H1 (cell line): ENCODE measurements at regions of chr2 and their contacts with region 1.

Region 1: GRCh38 chr2:96509114-96509846 is 4.1 kb upstream of the NEURL3 start:
- DNase-seq: peak; percentile 90 to 99
- H3K4me3 ChIP-seq: peak overlapping the region in 3 of 4 experiments; percentile 28 to 53 (median 40); a peak in 6 of 8 replicates
- H3K27ac ChIP-seq: no peak overlapping the region
- H3K4me1 ChIP-seq: peaks cover 0 to 6% (median 5%) of the 10 kb centered on the region in 4 experiments; a peak in 3 of 7 replicates
- H3K27me3 ChIP-seq: peaks cover 4 to 14% (median 10%) of the 10 kb centered on the region in 4 experiments
- CTCF ChIP-seq: peak in 2 of 3 experiments; percentile 98 to 99; a peak in 3 of 4 replicates
- EP300 ChIP-seq: no peak
- POLR2A ChIP-seq: no peak
- RAD21 ChIP-seq: peak; percentile 96

Region 2: DNA sequence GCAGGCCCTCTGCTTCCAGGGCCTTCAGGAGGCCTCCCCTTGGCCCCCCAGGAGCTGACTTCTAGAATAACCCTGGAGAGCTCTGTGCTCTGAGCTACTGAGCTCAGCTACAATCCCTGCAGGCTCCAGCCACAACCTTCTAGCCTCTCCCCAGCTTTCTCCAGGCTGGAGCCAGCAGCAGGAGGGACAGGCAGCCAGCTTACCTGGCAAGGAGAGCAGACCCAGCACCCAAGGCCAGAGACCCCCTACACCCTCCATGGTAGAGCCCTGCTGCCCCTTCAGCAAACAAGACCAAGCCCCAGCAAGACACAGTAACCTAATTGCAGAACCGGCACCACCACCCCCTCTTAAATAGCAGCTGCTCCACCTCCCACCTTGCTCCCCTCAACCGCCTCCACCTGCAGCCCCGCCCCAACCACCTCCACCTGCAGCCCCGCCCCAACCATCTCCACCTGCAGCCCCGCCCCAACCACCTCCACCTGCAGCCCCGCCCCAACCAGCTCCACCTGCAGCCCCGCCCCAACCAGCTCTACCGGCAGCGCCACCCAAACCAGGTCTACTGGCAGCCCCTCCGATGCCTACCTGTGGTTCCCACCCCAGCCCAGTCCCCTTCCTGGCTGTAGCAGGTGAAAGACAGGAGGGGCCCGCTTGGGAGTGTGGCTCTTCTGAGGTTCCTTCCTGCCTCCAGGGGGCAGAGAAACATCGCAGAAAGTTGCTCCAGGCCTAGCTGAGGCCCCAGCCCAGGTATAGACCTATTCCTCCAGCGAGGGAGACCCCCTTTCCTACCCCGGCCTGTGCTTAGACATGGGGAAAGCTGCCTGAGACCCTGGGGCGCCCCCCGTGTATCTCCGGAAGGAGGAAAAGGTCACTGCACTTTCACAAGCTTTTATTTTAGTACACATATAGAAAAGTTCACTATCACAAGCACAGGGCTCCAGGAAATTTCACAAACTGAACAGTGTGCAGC is 370.8 kb before region 1 on chr2 and contains the start of gene ASTL:
- CTCF ChIA-PET with region 1: no interaction called
- POLR2A ChIA-PET with region 1: no interaction called
- DNase-seq: peak; percentile 85 to 88
- H3K4me3 ChIP-seq: peak within 1 kb of the TSS in 1 of 4 experiments; percentile 39; a peak in 2 of 8 replicates
- H3K27ac ChIP-seq: no peak within 1 kb of the TSS
- H3K4me1 ChIP-seq: peaks cover 0 to 13% (median 6%) of the 10 kb centered on the region in 4 experiments; a peak in 5 of 7 replicates
- H3K27me3 ChIP-seq: no peaks in the 10 kb centered on the region
- CTCF ChIP-seq: peak in 2 of 3 experiments; percentile 76 to 90; a peak in 3 of 4 replicates
- EP300 ChIP-seq: peak in 1 of 2 experiments; percentile 37; a peak in 1 of 3 replicates
- POLR2A ChIP-seq: no peak; a peak in 1 of 3 replicates
- RAD21 ChIP-seq: peak; percentile 87 to 90
- total RNA-seq, gene ASTL: 0.60 and 0.75 TPM in 2 replicates

Region 3: DNA sequence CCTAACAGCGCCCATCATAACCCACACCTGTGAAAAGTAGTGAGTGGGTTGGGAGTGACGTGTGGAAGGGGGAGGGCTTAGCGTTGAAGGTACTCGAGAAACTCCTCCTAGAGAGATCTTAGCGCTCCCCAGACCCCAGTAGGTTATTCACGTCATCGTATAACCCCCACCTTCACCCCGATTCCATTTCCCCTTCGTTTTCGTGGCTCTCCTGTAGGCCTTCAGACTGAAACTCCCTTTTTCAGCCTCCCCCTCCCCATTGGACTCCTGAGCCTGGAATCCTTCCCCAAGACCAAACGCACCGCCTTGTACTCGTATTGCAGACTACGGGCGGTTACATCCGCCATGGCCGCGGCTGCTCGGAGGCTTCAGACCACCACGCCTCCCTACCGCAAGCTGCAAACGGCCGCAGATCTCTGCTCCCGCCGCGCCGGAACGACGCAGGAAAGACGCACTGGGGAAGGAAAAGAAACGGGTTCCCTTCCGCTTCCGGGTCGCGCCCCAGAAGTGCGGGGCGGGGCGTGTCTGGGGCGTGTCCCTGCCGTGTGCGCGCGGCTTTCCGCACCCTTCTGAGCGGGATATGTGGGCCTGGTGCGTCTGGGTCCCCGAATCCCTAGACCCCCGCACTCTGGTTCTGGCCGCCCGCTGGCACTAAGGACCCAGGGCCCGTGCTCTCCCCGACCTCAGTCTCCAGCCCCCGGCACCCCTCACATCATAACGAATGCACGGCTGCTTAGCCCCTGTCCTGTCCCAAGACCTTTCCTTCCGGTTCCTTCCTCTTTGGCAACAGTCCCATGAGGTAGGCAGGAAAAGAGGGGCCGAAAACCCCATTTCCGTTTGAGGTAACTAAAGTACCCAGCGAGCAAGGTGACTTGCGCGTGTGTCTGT is 203.9 kb before region 1 on chr2 and contains the start of gene SNRNP200:
- CTCF ChIA-PET with region 1: no interaction called
- POLR2A ChIA-PET with region 1: no interaction called
- DNase-seq: peak; percentile 41 to 89
- H3K4me3 ChIP-seq: peak within 1 kb of the TSS; percentile 79 to 98 (median 86)
- H3K27ac ChIP-seq: peak within 1 kb of the TSS; percentile 82; the same call in 1 of the 2 replicates
- H3K4me1 ChIP-seq: peaks cover 0 to 13% (median 4%) of the 10 kb centered on the region in 4 experiments; a peak in 4 of 7 replicates
- H3K27me3 ChIP-seq: no peaks in the 10 kb centered on the region
- CTCF ChIP-seq: no peak
- EP300 ChIP-seq: 0 out of 3 replicates have a peak, but pooled peaks of 1 of the 2 experiments have one; percentile 4
- POLR2A ChIP-seq: peak; percentile 60 to 85
- RAD21 ChIP-seq: 0 out of 4 replicates have a peak, but pooled peaks of 1 of the 2 experiments have one; percentile 6
- total RNA-seq, gene SNRNP200: 190 and 199 TPM in 2 replicates

Region 4: DNA sequence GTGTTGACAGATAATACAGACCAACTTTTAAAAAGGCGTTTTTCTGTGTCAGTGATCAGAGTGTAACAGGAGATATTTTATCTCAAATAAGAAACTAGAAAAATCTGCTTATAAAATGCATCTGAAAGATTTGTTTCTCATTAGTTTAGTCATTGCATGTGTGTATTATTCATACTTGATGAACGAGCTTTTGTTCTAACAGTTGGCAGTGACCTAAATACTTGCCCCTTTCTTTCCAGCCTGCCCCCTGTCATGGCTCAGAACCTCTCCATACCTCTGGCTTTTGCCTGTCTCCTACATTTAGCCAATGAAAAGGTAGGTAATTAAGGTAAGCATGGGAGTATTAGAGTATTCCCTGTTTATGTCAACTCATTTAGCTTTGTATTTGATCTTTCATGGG is 140.1 kb before region 1 on chr2:
- CTCF ChIA-PET with region 1: interaction called, 12 read pairs
- POLR2A ChIA-PET with region 1: no interaction called
- DNase-seq: no peak
- H3K4me3 ChIP-seq: no peak overlapping the region
- H3K27ac ChIP-seq: no peak overlapping the region
- H3K4me1 ChIP-seq: no peaks in the 10 kb centered on the region
- H3K27me3 ChIP-seq: no peaks in the 10 kb centered on the region
- CTCF ChIP-seq: no peak
- EP300 ChIP-seq: no peak
- POLR2A ChIP-seq: no peak
- RAD21 ChIP-seq: no peak

Region 5: GRCh38 chr2:96470636-96471035 is 38.6 kb before region 1 on chr2:
- CTCF ChIA-PET with region 1: interaction called, 16 read pairs
- POLR2A ChIA-PET with region 1: no interaction called
- DNase-seq: peak; percentile 77 to 96
- H3K4me3 ChIP-seq: peak overlapping the region in 1 of 4 experiments; percentile 45; a peak in 2 of 8 replicates
- H3K27ac ChIP-seq: no peak overlapping the region
- H3K4me1 ChIP-seq: no peaks in the 10 kb centered on the region
- H3K27me3 ChIP-seq: no peaks in the 10 kb centered on the region
- CTCF ChIP-seq: peak; percentile 86 to 98 (median 89)
- EP300 ChIP-seq: no peak
- POLR2A ChIP-seq: no peak
- RAD21 ChIP-seq: peak; percentile 57 to 77

Region 6: GRCh38 chr2:96498023-96498431 is 11.3 kb before region 1 on chr2:
- CTCF ChIA-PET with region 1: interaction called, 76 read pairs
- POLR2A ChIA-PET with region 1: no interaction called
- DNase-seq: no peak
- H3K4me3 ChIP-seq: no peak overlapping the region
- H3K27ac ChIP-seq: no peak overlapping the region
- H3K4me1 ChIP-seq: peaks cover 0 to 5% (median 1%) of the 10 kb centered on the region in 4 experiments; a peak in 2 of 7 replicates
- H3K27me3 ChIP-seq: no peaks in the 10 kb centered on the region
- CTCF ChIP-seq: peak; percentile 53 to 57 (median 55)
- EP300 ChIP-seq: no peak
- POLR2A ChIP-seq: no peak
- RAD21 ChIP-seq: peak; percentile 25 to 35; a peak in 3 of 4 replicates

Region 7: DNA sequence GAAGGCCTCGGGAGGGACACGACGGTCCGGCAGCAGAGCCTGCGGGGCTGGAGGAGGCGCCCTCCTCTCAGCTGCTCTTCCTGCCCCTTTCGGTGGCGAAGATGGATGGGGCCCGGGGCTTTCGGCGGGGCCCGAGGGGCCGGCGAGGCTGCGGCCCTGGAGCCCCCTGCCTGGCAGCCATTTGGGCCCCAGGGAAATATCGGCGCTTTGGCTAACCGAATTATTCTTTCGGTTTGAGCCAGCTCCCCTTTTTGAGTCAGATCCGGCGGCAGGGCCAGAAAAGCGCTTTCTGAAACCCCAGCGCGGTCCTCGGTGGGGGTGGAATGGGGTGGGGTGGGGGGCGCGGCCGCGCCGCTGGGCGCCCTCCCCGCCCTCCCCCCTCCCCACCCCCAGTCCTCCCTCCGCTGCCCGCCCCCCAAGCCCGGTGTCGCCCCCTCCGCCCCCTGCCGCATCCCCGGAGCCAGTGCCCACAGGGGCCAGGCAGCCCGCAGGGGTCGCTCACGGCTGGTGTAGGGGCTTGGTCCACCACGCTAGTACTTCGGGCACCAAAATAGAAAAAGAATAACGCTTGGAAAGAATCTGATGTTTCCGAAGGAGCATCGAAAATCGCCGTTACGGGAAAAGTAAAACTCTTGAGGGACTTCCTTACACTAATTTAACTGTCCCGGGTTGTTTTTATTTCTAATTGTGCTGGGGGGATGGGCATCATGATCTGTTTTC is 18.2 kb after region 1 on chr2:
- CTCF ChIA-PET with region 1: interaction called, 14 read pairs
- POLR2A ChIA-PET with region 1: no interaction called
- DNase-seq: peak in 1 of 2 experiments; percentile 75
- H3K4me3 ChIP-seq: peak overlapping the region; percentile 34 to 63 (median 49)
- H3K27ac ChIP-seq: no peak overlapping the region
- H3K4me1 ChIP-seq: peaks cover 2 to 4% (median 3%) of the 10 kb centered on the region in 4 experiments; a peak in 6 of 7 replicates
- H3K27me3 ChIP-seq: peaks cover 0 to 28% (median 22%) of the 10 kb centered on the region in 4 experiments; a peak in 6 of 7 replicates
- CTCF ChIP-seq: peak in 2 of 3 experiments; percentile 37 to 67; a peak in 3 of 4 replicates
- EP300 ChIP-seq: no peak
- POLR2A ChIP-seq: no peak
- RAD21 ChIP-seq: peak in 1 of 2 experiments; percentile 51; a peak in 2 of 4 replicates

Region 8: GRCh38 chr2:96547751-96548161 is 38.5 kb after region 1 on chr2:
- CTCF ChIA-PET with region 1: interaction called, 28 read pairs
- POLR2A ChIA-PET with region 1: no interaction called
- DNase-seq: peak in 1 of 2 experiments; percentile 52
- H3K4me3 ChIP-seq: peak overlapping the region in 1 of 4 experiments; percentile 38; a peak in 4 of 8 replicates
- H3K27ac ChIP-seq: no peak overlapping the region
- H3K4me1 ChIP-seq: peaks cover 2 to 20% (median 5%) of the 10 kb centered on the region in 4 experiments; a peak in 6 of 7 replicates
- H3K27me3 ChIP-seq: peaks cover 0 to 2% (median 0%) of the 10 kb centered on the region in 4 experiments; a peak in 3 of 7 replicates
- CTCF ChIP-seq: peak in 1 of 3 experiments; percentile 28; a peak in 2 of 4 replicates
- EP300 ChIP-seq: no peak
- POLR2A ChIP-seq: no peak
- RAD21 ChIP-seq: peak; percentile 8 to 31; a peak in 1 of 4 replicates

Region 9: GRCh38 chr2:96895726-96896651 is 386.7 kb after region 1 on chr2:
- CTCF ChIA-PET with region 1: no interaction called
- POLR2A ChIA-PET with region 1: no interaction called
- DNase-seq: no peak
- H3K4me3 ChIP-seq: no peak overlapping the region
- H3K27ac ChIP-seq: no peak overlapping the region
- H3K4me1 ChIP-seq: peaks cover 0 to 17% (median 6%) of the 10 kb centered on the region in 4 experiments; a peak in 3 of 7 replicates
- H3K27me3 ChIP-seq: no peaks in the 10 kb centered on the region; a peak in 1 of 7 replicates
- CTCF ChIP-seq: no peak
- EP300 ChIP-seq: no peak
- POLR2A ChIP-seq: no peak
- RAD21 ChIP-seq: no peak